Psoas muscle (tissue), 8 donors: ENCODE measurements at regions of chr10 and their contacts with region 1.

Region 1: DNA sequence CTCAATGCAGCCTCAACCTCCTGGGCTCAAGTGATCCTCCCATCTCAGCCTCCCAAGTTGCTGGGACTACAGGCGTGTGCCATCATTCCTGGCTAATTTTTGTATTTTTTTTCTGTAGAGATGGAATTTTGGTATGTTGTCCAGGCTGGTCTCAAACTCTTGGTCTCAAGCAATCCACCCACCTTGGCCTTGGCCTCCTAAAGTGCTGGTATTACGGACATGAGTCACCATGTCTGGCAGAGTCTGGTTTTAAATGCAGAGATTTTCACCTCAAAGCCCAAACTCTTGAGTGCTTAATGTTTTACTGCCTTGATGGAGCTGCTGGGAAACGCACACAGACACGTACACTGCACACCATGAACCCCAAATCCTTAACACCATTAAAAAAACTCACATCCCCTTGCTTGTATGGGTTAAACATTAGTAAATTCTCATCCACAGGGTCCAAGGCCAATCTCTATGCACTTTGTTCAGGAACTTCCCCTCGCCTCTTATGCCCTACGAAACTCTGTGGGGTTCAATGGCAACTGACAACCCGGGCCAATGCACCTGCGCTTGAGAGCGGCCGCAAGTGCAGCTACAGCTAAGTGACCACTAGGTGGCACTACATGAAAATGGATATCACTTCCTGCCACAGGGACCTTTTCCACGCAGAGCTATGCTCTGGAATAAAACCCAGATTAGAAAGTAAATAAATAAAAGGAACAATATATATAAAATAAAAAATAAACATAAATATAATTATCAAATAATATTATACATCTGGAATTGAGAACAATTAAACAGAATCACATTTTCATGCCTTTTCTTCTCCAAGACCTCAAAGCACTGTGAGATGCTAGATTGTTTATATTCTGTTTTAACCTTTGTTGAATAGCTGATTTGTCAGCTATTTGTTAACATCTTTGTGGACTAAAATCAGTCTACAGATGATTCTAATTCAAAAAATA is 66.9 kb upstream of the AFAP1L2 start:
- DNase-seq: peak; percentile 52 to 75
- ATAC-seq: peak; percentile 80 to 96 (median 89)
- H3K4me3 ChIP-seq: no peak overlapping the region
- H3K27ac ChIP-seq: no peak overlapping the region
- H3K4me1 ChIP-seq: peaks cover 3% of the 10 kb centered on the region
- H3K27me3 ChIP-seq: no peaks in the 10 kb centered on the region
- CTCF ChIP-seq: peak; percentile 96

Region 2: DNA sequence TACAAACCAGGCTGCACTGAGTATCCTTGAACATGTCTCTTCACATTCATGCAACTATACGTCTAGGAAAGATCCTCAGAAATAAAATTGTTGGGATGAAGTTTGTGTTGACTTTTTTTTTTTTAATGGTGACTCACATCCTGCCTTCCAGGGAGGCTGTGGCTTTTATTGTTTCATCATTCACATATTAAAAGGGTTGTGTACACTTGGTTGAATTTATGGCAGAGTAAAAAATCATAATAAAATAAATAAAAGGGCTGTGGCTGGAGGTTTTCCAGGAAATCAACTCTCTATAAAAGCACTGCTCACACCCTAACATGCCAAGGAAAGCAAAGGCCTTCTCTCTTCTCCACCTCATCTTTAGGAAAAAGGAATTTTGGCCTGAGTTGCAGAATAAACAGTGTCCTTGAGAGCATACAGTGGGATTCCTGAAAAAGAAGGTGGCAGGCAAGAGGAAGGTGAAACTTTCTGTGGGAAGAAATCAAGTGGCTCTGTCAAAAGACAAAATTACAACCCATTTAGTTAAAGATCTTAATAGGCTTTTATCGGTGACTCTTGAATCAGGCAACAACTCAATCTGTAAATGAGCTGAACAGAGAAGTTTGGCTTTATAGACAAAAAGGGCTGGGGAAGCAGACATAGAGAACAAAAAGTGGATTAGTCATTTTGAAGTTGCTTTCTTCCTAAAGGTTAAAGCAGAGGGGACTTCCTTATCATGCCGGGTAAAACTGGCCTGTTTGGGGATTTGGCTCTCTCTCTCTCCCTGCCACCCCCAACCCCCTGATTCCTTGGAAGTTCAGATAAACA is 308.8 kb after region 1 on chr10:
- intact Hi-C with region 1: loop called (anchors 5 kb)
- DNase-seq: no peak
- ATAC-seq: no peak
- H3K4me3 ChIP-seq: no peak overlapping the region
- H3K27ac ChIP-seq: no peak overlapping the region
- H3K4me1 ChIP-seq: no peaks in the 10 kb centered on the region
- H3K27me3 ChIP-seq: no peaks in the 10 kb centered on the region
- CTCF ChIP-seq: no peak

Region 3: GRCh38 chr10:114810926-114811325 is 339.7 kb after region 1 on chr10:
- intact Hi-C with region 1: no loop called
- DNase-seq: no peak
- ATAC-seq: no peak
- H3K4me3 ChIP-seq: no peak overlapping the region
- H3K27ac ChIP-seq: no peak overlapping the region
- H3K4me1 ChIP-seq: no peaks in the 10 kb centered on the region
- H3K27me3 ChIP-seq: peaks cover 0 to 2% (median 0%) of the 10 kb centered on the region in 3 donors
- CTCF ChIP-seq: no peak

Region 4: DNA sequence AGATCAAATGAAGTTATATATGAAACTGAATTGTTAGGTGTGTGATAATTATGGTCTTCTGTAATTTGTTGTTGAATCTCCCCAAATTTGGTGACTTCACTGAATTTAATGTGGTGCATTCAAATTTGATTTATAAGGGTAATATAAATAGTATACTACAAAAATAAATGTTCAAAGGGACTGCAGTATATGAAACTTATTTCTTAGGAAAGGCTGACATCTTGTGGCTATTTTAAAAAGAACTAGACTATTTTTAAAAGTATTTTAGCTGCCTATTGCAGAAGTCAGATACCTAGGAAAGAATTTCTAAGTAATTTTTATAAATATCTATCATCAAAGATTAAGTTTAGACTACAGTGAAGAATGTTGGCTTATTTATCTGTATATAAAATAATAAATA is 658.5 kb after region 1 on chr10:
- intact Hi-C with region 1: loop called in 1 of 2 experiments (anchors 10 kb)
- DNase-seq: no peak
- ATAC-seq: peak in 3 of 4 donors; percentile 42 to 72 (median 59)
- H3K4me3 ChIP-seq: no peak overlapping the region
- H3K27ac ChIP-seq: no peak overlapping the region
- H3K4me1 ChIP-seq: no peaks in the 10 kb centered on the region
- H3K27me3 ChIP-seq: no peaks in the 10 kb centered on the region
- CTCF ChIP-seq: peak; percentile 63